Vagina (tissue), 2 donors: ENCODE measurements at regions of chr3 and their contacts with region 1.

Region 1: GRCh38 chr3:112734718-112735350 is 93.9 kb upstream of the CCDC80 start:
- DNase-seq: no peak
- H3K4me3 ChIP-seq: no peak overlapping the region
- H3K27ac ChIP-seq: no peak overlapping the region
- H3K4me1 ChIP-seq: peaks cover 38% of the 10 kb centered on the region
- H3K27me3 ChIP-seq: no peaks in the 10 kb centered on the region
- CTCF ChIP-seq: peak in 2 of 3 experiments; percentile 17 to 58
- POLR2A ChIP-seq: no peak

Region 2: DNA sequence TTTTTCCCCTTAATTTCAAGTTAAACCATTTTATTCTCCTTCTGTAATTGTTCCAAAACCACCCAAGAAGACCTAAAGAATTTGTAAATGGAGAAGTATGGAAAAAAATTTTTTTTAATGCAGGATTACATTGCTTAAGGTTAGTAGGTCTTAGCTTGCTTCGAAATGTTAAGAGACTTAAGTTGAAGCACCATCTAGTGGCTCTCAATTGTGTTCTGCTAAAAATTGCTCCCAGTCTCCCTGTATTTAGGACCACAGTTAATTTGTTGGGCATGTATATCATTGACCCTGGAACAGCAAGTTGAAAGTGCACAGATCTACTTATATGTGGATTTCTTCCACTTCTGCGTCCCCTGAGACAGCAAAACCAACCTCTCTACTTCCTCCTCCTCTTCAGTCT is 79.4 kb after region 1 on chr3:
- intact Hi-C with region 1: loop called (anchors 10 kb)
- DNase-seq: no peak
- H3K4me3 ChIP-seq: no peak overlapping the region
- H3K27ac ChIP-seq: peak overlapping the region; percentile 70
- H3K4me1 ChIP-seq: peaks cover 43% of the 10 kb centered on the region
- H3K27me3 ChIP-seq: no peaks in the 10 kb centered on the region
- CTCF ChIP-seq: peak in 2 of 3 experiments; percentile 64 to 70
- POLR2A ChIP-seq: no peak

Region 3: DNA sequence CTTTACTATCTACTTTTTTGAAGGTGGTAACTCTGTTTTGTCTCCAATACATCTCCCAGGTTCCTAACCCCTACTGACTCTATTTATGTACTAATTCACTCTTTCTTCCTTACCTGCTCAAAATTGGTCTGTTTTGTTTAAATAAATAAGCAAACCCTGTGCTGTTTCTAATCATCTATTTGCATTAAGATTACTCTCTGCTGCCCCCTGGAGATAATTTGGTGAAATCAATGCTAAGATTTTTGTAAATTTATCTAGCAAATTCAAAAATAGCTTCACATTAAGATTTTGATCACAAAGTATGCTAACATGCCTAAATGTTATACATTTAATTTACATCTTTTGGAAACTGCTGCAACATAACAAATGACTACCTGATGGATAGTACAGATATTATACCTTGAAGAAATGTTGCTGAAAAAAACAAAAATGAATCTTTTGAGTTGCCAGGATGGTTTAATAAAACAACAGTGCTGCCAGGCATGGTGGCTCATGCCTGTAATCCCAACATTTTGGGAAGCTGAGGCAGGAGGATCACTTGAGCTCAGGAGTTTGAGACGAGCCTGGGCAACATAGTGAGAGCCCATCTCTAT is 244.5 kb after region 1 on chr3:
- intact Hi-C with region 1: loop called (anchors 10 kb)
- DNase-seq: no peak
- H3K4me3 ChIP-seq: no peak overlapping the region
- H3K27ac ChIP-seq: no peak overlapping the region
- H3K4me1 ChIP-seq: no peaks in the 10 kb centered on the region
- H3K27me3 ChIP-seq: no peaks in the 10 kb centered on the region
- CTCF ChIP-seq: peak; percentile 67 to 82 (median 69)
- POLR2A ChIP-seq: no peak